ENCODE measurements at regions of chr6 and their contacts with region 1.

Region 1: DNA sequence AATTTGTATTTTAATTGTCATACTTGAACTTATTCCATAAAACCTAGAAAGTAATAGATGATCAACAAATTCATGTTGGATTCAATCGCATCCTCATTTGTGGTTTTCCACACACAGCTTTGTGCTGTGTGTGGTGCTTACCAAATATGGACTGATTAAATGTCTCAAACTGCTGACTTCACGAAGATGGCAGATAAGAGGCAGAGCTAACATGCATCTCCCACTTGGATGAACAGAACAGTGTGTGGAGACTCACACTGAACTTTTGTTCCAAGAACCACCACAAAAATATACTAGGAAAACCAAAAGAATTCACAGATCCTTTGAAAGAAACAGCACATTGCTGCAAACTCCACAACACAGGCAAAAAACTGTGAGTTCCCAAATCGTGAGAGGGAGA is 603.7 kb downstream of the TENT5A start:
- DNase-seq: no peak
- ATAC-seq: no peak
- H3K4me3 ChIP-seq: no peak overlapping the region
- H3K27ac ChIP-seq: no peak overlapping the region
- H3K4me1 ChIP-seq: no peaks in the 10 kb centered on the region
- H3K27me3 ChIP-seq: no peaks in the 10 kb centered on the region
- CTCF ChIP-seq: no peak
- POLR2A ChIP-seq: no peak
- RAD21 ChIP-seq: no peak

Region 2: DNA sequence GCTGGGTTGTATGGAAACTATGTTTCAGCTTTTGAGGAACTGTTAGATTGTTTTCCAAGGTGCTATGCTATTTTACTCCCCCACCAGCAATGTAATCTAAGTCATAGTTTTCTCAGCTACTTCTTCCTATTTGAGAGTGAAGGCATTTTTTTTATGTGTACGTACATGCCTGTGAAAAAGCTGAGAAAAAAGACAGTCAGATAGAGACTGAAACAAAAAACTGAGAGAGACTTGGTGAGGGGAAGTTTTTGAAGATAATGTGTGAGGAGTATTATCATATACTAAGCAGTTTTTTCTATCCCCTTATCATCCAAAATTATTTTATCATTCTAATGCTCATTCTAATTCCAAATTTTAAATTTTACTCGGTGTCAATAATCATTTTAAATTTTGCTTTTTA is 262.3 kb before region 1 on chr6:
- CTCF ChIA-PET with region 1: no interaction called
- POLR2A ChIA-PET with region 1: interaction called, 10 read pairs
- dilution Hi-C with region 1: no loop called
- in situ Hi-C with region 1: no loop called
- intact Hi-C with region 1: no loop called
- DNase-seq: no peak
- ATAC-seq: no peak
- H3K4me3 ChIP-seq: no peak overlapping the region
- H3K27ac ChIP-seq: no peak overlapping the region
- H3K4me1 ChIP-seq: no peaks in the 10 kb centered on the region
- H3K27me3 ChIP-seq: no peaks in the 10 kb centered on the region
- CTCF ChIP-seq: no peak
- POLR2A ChIP-seq: no peak
- RAD21 ChIP-seq: no peak